ENCODE measurements at regions of chr1 and their contacts with region 1.

Region 1: DNA sequence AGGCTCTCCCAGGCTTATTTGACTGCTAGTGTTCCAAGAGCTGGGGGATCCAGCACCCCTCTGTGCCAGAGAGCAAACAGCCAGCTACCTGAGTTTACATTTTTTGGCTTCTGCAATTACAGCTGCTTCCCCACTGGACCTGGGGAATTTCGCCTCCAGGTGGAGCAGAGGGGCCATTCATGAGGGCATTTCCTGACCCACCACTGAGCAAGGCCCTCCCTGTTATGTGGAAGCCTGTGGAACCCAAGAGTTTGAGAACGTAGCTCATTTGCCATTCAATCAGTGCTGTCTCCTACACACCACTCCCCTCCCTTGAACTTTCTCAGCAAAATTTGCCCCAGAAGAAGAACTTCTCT is 42.7 kb upstream of the TMEM51 start:
- DNase-seq: peak; percentile 34
- ATAC-seq: peak; percentile 71
- H3K4me3 ChIP-seq: no peak overlapping the region
- H3K27ac ChIP-seq: no peak overlapping the region
- H3K4me1 ChIP-seq: peaks cover 22% of the 10 kb centered on the region
- H3K27me3 ChIP-seq: no peaks in the 10 kb centered on the region
- CTCF ChIP-seq: peak; percentile 61
- EP300 ChIP-seq: no peak
- POLR2A ChIP-seq: no peak
- RAD21 ChIP-seq: no peak

Region 2: GRCh38 chr1:15046487-15047165 is 64.2 kb before region 1 on chr1:
- CTCF ChIA-PET with region 1: no interaction called
- POLR2A ChIA-PET with region 1: no interaction called
- in situ Hi-C with region 1: no loop called
- intact Hi-C with region 1: no loop called
- DNase-seq: peak; percentile 48
- ATAC-seq: peak; percentile 78
- H3K4me3 ChIP-seq: no peak overlapping the region
- H3K27ac ChIP-seq: no peak overlapping the region
- H3K4me1 ChIP-seq: no peaks in the 10 kb centered on the region
- H3K27me3 ChIP-seq: no peaks in the 10 kb centered on the region
- CTCF ChIP-seq: peak; percentile 88
- EP300 ChIP-seq: no peak
- POLR2A ChIP-seq: no peak
- RAD21 ChIP-seq: peak; percentile 79

Region 3: DNA sequence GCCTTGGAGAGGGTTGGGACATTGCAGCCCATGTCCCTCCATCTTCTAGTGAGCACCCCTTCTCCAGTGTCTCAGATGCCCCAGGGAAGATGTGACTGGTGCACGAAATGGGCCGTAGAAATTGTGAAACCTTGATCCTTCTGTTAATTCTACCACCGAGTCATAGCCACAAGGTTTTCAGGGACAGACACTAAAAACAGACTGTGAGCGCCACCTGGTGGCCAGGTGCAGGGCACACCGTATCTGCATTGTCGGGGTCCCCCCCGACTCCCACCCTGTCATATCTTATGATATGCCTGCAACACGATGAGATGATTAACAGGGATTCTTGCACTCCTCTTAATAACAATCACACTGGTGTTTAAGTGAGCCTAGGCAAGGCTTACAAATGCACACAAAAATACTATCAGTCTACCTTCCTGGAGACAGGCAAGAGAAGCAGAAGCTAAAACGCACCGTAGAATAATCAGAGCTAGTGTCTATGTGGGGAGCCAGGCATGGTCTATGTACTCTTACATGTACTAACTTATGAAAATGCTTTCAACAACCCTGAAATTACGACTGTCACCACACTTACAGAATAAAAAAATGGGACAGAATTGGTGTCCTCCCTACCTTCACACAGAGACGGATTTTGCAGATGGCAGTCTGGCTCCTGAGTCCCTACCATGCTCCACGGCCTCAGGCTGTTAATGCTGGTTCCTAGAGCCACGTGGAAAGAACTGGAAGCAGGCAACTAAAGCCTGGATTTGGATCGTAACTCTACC is 194.0 kb after region 1 on chr1:
- CTCF ChIA-PET with region 1: interaction called, 3 read pairs
- POLR2A ChIA-PET with region 1: no interaction called
- in situ Hi-C with region 1: no loop called
- intact Hi-C with region 1: loop called (anchors 1 kb)
- DNase-seq: peak; percentile 55
- ATAC-seq: peak; percentile 87
- H3K4me3 ChIP-seq: no peak overlapping the region
- H3K27ac ChIP-seq: no peak overlapping the region
- H3K4me1 ChIP-seq: peaks cover 19% of the 10 kb centered on the region
- H3K27me3 ChIP-seq: peaks cover 1 to 7% of the 10 kb centered on the region in 2 experiments; a peak in 3 of 5 replicates
- CTCF ChIP-seq: peak; percentile 94
- EP300 ChIP-seq: no peak
- POLR2A ChIP-seq: no peak
- RAD21 ChIP-seq: peak; percentile 89